ENCODE measurements at regions of chr5 and their contacts with region 1.

Region 1: DNA sequence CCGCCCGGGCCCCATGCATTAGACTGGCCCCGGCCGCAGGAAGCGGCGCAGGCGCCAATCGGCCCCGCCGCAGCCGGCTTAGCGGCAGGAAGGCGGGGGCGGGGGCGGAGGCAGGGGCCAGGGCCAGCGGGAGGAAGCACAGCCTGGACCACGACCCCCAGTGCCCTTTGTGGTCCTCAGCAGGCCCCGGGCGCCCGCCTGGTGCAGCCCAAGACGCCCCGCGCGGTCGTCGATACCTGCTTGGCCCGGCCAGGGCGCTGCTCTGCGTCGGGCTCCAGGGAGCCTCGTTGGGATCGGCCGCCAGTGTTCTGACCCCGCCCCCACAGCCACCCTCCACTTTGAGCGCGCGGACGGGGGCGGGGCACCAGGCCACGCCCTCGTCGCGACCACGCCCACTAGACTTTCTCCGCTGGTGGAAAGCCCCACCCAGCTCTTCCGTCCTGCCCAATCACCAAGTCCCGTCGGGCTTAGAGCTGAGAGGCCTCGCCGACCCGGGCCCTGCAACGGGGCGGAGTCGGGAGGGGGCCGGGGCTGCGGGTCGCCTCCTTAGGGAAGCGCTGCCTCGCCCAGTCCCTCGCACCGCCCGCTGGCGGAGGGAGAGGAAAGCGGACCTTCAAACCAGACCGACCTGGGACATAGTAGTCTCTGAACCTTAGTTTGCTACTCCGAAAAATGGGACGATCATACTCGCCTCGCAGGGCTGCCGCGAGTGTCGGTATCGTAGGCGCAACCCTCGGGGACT is at the start of gene PDLIM7:
- DNase-seq: peak; percentile 98
- H3K4me3 Mint-ChIP-seq: peak within 1 kb of the TSS; percentile 89
- H3K27ac Mint-ChIP-seq: peak within 1 kb of the TSS; percentile 78
- H3K4me1 Mint-ChIP-seq: peaks cover 39% of the 10 kb centered on the region
- H3K27me3 Mint-ChIP-seq: peaks cover 21% of the 10 kb centered on the region
- total RNA-seq, gene PDLIM7: 64.9 and 65.3 TPM in 2 replicates

Region 2: DNA sequence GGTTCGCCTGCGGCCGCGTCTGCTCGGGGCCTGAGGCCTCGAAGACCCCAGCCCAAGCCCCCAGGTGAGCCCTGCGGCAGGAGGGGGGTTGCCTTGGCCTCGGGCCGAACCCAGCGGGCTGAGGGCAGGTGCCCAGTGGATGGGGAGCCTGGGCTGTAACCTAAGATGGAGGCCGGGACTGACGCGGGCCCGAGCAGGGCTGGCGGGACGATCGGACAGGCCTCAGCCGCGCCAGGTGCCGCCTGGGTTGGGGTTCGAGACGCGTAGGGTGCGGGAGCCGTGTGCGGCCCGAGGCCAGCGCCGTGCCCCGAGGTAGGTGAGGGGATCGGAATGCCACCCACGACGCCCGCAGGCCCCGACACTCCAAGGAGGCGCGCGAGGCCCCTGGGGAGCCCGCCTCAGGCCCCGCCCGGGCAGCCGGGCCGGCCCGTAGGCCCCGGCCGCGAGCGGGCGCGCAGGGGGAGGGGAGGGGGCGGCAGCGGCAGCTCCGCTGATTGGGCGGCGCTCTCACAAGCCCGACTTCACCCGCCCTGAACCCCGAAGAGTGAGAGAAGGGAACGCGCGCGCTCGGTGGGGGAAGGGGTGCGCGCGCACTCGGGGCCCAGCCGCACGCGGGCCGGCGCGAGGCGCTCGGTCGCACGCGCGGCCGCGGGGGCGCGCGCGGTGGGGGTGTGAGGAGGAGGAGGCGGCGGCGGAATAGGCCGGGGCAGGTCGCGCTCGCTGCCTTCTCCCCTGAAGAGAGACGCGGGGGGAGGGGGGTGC is 364.2 kb before region 1 on chr5 and contains the start of gene NSD1:
- intact Hi-C with region 1: loop called (anchors 2 kb)
- DNase-seq: peak; percentile 97
- H3K4me3 Mint-ChIP-seq: peak within 1 kb of the TSS; percentile 95
- H3K27ac Mint-ChIP-seq: peak within 1 kb of the TSS; percentile 92
- H3K4me1 Mint-ChIP-seq: peaks cover 46% of the 10 kb centered on the region
- H3K27me3 Mint-ChIP-seq: no peaks in the 10 kb centered on the region
- total RNA-seq, gene NSD1: 103 and 108 TPM in 2 replicates

Region 3: DNA sequence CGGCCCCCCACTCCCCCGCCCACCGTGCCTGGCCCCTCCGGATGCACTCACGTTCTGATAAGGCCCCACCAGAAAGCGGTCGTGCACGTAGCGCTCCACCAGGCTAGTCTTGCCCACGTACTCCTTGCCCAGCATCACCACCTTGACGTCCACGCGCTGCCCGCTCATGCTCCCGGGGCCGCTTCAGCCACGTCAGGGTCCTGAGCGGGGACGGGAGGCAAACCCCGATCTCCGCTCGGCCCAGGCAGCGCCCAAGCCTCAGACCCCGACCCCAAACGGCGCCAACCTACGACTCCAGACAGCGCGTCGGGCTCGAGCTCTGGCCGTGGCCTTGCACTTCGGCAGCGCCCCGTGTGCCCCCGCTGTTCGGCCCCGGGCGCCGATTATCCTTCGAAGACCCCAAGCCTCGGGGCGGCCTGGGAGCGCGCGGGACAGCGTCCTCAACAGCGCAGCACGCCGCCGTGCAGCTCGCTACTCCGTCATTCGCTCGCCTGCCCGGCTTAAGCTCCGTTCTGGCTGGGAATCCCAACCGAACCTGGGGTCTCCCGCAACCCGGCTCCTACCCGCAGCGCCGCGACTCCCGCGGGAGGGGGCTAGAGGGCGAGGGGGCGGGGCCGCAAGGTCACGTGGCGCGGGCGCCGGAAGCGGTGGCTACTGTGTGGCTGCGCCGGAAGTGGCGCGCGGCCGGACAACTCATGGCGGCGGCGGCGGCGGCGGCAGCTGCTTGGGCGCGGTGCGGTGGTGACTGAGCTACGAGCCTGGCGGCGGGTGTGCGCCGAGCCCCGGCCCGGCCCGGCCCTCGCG is 194.1 kb before region 1 on chr5 and contains the starts of genes PRELID1 and RAB24:
- intact Hi-C with region 1: no loop called
- DNase-seq: peak; percentile 97
- H3K4me3 Mint-ChIP-seq: peak within 1 kb of the TSS; percentile 98
- H3K27ac Mint-ChIP-seq: peak within 1 kb of the TSS; percentile 88
- H3K4me1 Mint-ChIP-seq: peaks cover 61% of the 10 kb centered on the region
- H3K27me3 Mint-ChIP-seq: no peaks in the 10 kb centered on the region
- total RNA-seq, gene PRELID1: 248 and 257 TPM in 2 replicates
- total RNA-seq, gene RAB24: 18.3 and 22.2 TPM in 2 replicates

Region 4: GRCh38 chr5:177317959-177318377 is 179.5 kb before region 1 on chr5:
- intact Hi-C with region 1: loop called (anchors 2 kb)
- DNase-seq: peak; percentile 92
- H3K4me3 Mint-ChIP-seq: no peak overlapping the region
- H3K27ac Mint-ChIP-seq: no peak overlapping the region
- H3K4me1 Mint-ChIP-seq: peaks cover 24% of the 10 kb centered on the region
- H3K27me3 Mint-ChIP-seq: no peaks in the 10 kb centered on the region

Region 5: DNA sequence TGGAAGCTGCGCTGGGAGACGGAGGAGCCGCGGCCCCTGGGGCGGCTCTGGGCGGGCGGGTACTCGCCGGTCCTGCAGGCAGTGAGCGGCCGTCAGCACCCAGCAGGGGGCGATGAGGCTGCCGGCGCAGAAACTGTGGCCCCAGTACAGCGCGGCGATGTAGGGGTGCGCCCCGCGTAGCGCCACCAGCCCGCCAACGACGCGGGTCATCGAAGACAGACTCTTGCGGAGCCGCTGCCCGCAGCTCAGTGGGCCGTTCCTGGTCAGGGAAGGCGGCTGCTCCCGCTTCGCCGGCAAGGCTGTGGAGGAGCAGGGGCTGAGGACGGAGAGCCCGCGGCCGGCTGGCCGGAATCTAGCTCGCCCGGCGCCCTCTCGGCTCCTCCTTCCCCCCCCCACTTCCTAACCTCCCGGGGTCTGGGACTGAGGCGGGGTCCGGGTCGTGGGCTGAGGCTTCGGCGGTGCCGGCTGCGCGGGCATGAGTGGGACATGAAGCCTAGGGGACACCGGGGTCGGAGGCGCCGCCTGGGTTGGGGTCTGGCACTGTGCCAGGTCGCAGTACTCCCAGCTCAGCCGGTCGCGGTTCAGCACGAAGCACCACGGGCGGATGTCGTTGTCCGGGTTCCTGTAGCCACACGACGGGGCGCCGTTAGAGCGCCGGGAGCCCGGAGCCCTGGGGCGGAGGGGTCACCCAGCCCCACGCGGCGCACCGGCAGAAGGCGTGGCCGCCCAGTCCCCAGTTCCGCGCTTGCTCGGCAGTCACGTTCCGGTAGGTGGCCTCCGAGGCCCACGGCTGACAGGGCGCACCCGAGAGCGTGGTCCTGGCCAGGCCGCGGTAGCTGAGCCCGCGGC is 93.4 kb before region 1 on chr5:
- intact Hi-C with region 1: loop called (anchors 1 kb)
- DNase-seq: peak; percentile 95
- H3K4me3 Mint-ChIP-seq: peak overlapping the region; percentile 88
- H3K27ac Mint-ChIP-seq: peak overlapping the region; percentile 67
- H3K4me1 Mint-ChIP-seq: peaks cover 17% of the 10 kb centered on the region
- H3K27me3 Mint-ChIP-seq: peaks cover 33% of the 10 kb centered on the region

Region 6: GRCh38 chr5:177454397-177455035 is 42.9 kb before region 1 on chr5:
- intact Hi-C with region 1: loop called (anchors 2 kb)
- DNase-seq: peak; percentile 98
- H3K4me3 Mint-ChIP-seq: peak overlapping the region; percentile 85
- H3K27ac Mint-ChIP-seq: no peak overlapping the region
- H3K4me1 Mint-ChIP-seq: peaks cover 10% of the 10 kb centered on the region
- H3K27me3 Mint-ChIP-seq: peaks cover 18% of the 10 kb centered on the region

Region 7: DNA sequence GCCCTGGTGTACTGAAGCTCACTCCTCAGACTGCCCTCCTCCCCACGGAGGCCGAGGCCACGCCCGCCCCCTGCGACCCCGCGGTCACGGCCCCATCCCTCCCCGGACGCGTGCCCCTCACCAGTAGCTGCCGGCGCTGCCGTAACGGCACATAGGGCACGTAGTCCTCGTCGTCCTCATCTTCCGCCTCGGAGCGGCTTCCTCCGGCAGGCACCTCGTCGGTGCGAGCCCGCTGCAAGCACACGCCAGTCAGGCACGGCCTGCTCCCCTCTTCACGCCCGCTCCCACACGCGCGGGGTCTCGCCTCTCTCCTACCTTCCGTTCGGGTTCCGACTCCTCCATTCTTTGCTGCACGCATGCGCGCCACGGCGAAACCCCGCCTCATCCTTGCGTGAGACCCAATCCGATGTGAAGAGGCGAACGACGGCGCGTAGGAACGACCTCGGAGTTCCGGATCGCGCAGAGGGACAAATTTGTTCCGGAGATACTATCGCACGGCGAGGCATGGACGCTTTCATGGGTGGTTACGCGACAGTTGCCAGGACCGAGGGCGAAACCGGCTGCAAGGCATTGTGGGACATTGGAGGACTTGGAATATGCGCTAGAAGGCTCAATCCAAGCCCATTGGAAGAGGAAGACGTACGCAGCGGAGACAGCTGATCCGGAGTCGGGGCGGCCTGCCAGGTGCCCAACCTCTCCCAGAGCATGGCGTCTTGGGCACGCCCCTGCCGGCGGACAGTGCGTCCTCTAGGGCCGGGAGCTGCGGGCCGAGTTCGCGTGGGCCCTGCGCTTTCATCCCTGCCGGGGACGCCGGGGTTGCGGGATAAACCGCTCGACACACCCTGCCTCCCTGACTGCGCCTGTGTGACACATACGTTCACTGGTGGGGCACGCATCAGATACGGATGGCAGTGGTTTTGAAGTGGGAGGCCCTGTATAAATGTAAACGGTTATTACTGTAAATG is 19.4 kb after region 1 on chr5 and contains the start of gene DDX41:
- intact Hi-C with region 1: loop called (anchors 1 kb)
- DNase-seq: peak; percentile 99
- H3K4me3 Mint-ChIP-seq: peak within 1 kb of the TSS; percentile 91
- H3K27ac Mint-ChIP-seq: peak within 1 kb of the TSS; percentile 92
- H3K4me1 Mint-ChIP-seq: peaks cover 32% of the 10 kb centered on the region
- H3K27me3 Mint-ChIP-seq: no peaks in the 10 kb centered on the region
- total RNA-seq, gene DDX41: 157 and 172 TPM in 2 replicates